Activated T-helper 1 cell treated with anti-CD3 and anti-CD28 coated beads, Interleukin-12 subunit alpha, Interleukin-12 subunit beta, Interleukin-2, Interleukin-4 antibody, amounts not matched to agents 30 ng/mL and 10 ng/mL and 1 ng/mL, durations not matched to agents 14 hours and 24 hours and 36 hours (primary cell): ENCODE measurements at regions of chr19 and their contacts with region 1.

Region 1: GRCh38 chr19:35702223-35703012 is 1.9 kb upstream of the ZBTB32 start:
- DNase-seq: peak; percentile 93
- H3K4me3 Mint-ChIP-seq: peak overlapping the region; percentile 95
- H3K27ac Mint-ChIP-seq: peak overlapping the region; percentile 97
- H3K4me1 Mint-ChIP-seq: peaks cover 18% of the 10 kb centered on the region
- H3K27me3 Mint-ChIP-seq: no peaks in the 10 kb centered on the region

Region 2: DNA sequence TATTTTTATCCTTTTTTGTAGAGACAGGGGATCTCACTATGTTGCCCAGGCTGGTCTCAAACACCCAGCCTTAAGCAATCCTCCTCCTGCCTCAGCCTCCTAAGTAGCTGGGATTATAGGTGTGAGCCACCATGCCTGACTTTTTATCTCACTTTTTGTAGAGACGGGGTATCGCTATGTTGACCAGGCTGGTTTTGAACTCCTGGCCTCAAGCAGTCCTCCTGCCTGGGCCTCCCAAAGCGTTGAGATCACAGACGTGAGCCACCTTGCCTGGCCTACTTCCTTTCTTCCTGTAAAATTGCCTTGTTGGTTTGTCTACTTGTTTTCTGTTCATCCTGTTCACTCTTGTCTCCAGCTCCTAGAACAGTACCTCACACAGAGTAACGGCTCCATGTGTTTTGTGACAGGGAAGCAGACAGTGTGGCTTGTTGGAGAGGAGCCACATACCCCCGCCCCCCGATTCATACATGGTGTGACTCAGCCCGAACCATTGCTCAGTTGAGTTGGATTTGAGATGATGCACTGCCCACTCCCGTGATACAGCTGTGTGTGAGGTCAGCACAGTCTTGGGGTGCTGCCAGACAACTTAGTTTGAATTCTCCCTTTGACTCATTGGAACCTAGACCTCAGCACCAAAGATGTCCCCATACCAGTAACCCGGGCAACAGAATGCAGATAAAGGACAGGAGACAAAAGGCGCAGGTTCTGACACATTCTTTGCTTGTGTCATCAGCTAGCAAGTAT is 297.4 kb before region 1 on chr19:
- intact Hi-C with region 1: no loop called
- DNase-seq: no peak
- H3K4me3 Mint-ChIP-seq: no peak overlapping the region
- H3K27ac Mint-ChIP-seq: peak overlapping the region; percentile 84
- H3K4me1 Mint-ChIP-seq: peaks cover 9% of the 10 kb centered on the region
- H3K27me3 Mint-ChIP-seq: peaks cover 10% of the 10 kb centered on the region

Region 3: DNA sequence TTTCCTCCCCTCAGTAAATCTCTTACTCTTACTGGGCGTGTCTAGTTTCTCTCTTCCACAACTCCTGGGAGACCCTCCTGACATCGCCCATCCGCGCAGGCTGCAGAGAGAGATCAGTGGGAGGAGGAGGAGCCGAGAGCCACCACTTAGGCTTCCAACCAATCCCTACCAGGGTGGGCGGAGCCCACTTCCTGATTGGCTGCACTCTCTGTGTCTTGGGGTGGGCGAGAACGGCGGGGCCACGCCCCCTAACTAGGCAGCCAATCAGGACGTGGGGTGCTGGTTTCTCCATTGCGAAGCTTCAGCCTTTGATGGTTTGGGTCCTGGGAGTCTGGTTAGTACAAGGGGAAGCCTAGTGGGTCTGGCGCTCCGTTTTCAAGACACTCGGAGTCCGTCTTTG is 116.6 kb before region 1 on chr19 and contains the start of gene PMIS2:
- intact Hi-C with region 1: no loop called
- DNase-seq: no peak
- H3K4me3 Mint-ChIP-seq: no peak within 1 kb of the TSS
- H3K27ac Mint-ChIP-seq: no peak within 1 kb of the TSS
- H3K4me1 Mint-ChIP-seq: no peaks in the 10 kb centered on the region
- H3K27me3 Mint-ChIP-seq: peaks cover 10% of the 10 kb centered on the region
- total RNA-seq, gene PMIS2: not detected in 2 replicates

Region 4: DNA sequence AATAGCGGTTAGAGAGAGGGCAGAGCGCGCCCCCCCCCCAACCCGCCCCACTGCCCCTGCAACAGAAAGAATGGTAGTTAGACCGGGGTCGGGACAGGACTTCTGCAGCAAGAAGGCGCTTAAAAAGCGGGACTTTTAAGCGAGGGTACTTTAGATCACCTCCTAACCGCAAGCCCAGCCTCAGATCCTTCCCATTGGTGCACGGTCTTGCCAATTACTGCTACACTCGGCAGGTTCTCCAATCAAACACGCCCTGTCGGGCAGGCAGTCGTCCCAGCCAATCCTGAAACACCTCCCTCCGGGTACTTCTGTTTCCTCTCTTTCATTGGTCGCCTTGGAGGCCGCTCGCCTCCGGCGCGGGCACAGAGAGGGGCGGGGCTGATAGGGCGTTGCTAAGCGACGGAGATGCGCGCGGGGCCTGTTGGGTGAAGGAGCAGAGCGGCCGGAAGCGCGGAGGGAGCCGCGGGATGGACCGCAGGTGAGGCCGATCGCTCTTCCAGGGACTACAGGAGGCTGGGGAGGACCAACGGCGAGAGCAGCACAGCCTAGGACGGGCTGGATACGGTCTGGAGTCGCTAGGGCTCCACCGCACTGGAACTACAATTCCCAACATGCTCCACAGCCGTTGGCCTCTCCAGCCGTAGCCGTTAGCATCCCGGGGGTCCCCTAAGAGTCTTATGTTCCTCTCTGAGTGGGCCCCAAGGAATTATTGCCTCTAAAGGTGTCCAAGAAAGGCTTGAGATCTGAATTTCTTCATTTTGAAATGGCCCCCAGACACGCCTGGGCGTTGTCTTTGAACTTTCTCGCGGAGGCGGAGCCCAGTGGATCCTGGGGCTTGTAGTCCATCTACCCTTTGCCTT is 55.6 kb after region 1 on chr19 and contains the start of gene PROSER3:
- intact Hi-C with region 1: loop called (anchors 2 kb)
- DNase-seq: peak; percentile 99
- H3K4me3 Mint-ChIP-seq: peak within 1 kb of the TSS; percentile 89
- H3K27ac Mint-ChIP-seq: peak within 1 kb of the TSS; percentile 90
- H3K4me1 Mint-ChIP-seq: peaks cover 29% of the 10 kb centered on the region
- H3K27me3 Mint-ChIP-seq: no peaks in the 10 kb centered on the region
- total RNA-seq, gene PROSER3: 39.5 and 45.1 TPM in 2 replicates